ENCODE measurements at regions of chr14 and their contacts with region 1.

Region 1: DNA sequence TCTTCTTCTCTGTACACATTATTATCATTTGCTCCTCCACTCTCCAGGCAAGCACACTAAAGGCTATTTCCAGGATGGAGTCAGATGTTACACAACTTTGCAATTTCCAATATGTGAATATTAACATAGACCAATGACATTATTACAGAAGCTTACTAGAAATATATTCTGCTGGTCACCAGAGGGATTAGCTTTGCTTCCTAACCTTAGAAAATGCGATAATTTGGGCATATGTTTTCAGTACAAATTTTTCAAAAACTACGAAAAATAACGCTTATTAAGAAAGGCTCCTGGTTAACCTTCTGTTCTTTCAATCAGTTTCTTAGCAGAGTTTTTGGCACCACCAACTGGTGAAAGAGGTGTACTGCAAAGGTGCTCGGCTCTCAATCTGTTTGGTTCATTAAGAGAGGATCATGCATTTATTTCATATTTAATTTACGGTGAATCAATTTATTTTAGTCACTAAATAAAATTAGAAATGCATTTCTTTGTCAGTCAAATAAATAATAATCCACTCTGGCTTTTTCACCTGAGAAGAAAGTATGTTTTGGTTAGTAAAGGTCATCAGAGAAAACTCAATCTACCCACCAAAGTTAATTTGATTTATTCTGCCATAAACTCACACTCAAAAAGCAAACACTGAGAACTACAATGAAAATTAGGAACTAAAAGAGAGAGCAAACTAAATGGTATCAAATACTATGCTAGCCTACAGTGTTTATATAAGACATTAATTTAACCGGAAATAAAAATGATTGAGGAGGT is 39.2 kb downstream of the EFCAB11 start:
- DNase-seq: no peak
- ATAC-seq: peak; percentile 57

Region 2: GRCh38 chr14:88667555-88668273 is 1247.6 kb before region 1 on chr14:
- intact Hi-C with region 1: loop called (anchors 5 kb)
- DNase-seq: no peak
- ATAC-seq: peak; percentile 72

Region 3: GRCh38 chr14:89027097-89027740 is 888.1 kb before region 1 on chr14:
- intact Hi-C with region 1: loop called (anchors 5 kb)
- DNase-seq: peak; percentile 78
- ATAC-seq: peak; percentile 85

Region 4: DNA sequence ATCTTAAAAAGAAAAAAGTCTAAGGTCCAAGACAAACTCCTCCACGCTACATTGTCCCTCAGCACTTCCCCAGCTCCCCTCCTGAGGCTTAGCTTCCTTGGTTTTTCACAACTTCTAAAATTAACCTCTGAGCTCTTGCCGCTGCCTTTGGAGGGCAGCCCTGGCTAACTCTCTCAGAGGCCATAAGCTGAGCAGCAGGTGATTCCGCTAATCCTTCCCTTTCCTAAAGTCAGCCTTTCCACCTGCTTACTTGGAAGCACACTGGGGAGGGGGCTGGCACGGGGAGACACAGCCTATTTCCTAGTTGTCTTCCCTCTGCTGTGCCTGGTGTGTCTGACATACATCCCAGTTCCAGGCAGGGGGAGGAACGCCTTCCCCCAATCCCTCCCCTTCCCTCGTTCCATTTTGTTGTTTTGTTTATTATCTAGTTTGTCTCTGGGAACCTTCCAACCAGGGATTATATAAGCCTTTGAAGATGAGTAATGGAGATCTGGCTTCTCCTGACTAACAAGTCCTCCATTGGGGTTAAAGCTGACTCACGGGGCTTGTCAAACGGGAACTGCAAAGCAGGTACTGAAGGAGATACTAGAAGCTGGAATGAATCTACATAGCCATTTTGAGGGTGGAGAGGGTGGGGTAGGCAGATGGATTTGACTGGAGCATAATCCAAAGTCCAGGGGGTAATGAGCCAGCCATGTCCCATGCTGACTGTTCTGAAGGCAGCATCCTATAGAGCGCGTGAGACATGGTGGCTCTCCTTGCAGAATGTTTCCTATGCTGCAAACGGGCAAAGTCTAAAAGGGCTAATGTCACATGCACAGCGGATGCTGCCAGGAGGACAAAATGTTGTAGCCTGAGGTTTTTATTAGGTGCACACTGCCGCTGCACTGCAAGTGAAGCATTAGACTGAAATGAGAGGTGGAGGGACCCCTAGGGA is 729.1 kb before region 1 on chr14:
- intact Hi-C with region 1: loop called (anchors 10 kb)
- DNase-seq: no peak
- ATAC-seq: peak; percentile 43

Measured in Right ventricle myocardium inferior (tissue), 1 donor.